ENCODE measurements at regions of chr6 and their contacts with region 1.

Region 1: DNA sequence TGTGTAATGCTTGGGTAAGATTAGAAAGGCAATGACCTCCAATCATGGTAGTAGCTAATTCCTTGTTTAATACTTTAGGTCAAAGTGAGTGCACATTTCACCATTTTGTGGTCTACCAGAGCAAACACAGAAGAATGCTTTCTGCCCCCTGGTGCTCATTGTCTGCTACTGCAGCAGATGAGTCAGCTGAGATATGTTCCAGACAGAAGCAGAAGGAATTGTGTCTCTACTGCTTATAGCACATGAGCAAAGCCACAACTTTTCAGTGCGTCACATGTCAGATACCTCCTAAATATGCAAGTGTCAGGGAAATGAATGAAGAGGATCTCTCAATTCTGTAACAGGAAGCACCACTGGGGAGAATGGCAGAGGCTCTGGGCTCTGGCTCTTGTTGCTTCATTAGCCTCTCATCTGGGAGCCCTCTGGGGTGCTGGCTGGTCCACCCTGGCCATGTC is 308.9 kb downstream of the ALDH8A1 start:
- DNase-seq: peak; percentile 85
- H3K4me3 Mint-ChIP-seq: no peak overlapping the region
- H3K27ac Mint-ChIP-seq: no peak overlapping the region
- H3K4me1 Mint-ChIP-seq: peaks cover 32% of the 10 kb centered on the region
- H3K27me3 Mint-ChIP-seq: no peaks in the 10 kb centered on the region

Region 2: GRCh38 chr6:134288538-134289203 is 352.3 kb before region 1 on chr6:
- CTCF ChIA-PET with region 1: interaction called, 3 read pairs
- POLR2A ChIA-PET with region 1: no interaction called
- intact Hi-C with region 1: loop called (anchors 2 kb)
- DNase-seq: peak; percentile 15
- H3K4me3 Mint-ChIP-seq: peak overlapping the region; percentile 21
- H3K27ac Mint-ChIP-seq: peak overlapping the region; percentile 85
- H3K4me1 Mint-ChIP-seq: peaks cover 22% of the 10 kb centered on the region
- H3K27me3 Mint-ChIP-seq: no peaks in the 10 kb centered on the region

Region 3: DNA sequence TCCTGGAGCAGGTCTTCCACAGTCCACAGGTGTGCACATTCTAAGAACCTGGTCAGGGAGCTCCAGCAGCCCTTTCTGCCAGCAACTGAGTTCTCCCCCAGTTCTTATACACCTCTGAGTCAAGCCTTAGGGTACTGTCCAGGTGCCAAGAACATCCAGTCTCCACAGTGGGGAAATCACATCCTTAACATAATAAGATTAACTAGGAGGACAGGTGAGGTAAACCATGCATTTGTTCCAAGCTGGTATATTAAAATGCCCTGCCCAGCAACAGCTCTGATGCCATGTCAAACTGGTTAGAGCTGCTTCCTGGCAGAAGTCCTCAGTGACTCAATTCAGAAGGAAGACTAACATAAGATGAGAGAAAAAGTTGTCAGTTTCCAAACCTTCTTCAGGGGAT is 19.1 kb before region 1 on chr6:
- CTCF ChIA-PET with region 1: interaction called, 16 read pairs
- POLR2A ChIA-PET with region 1: no interaction called
- intact Hi-C with region 1: no loop called
- DNase-seq: no peak
- H3K4me3 Mint-ChIP-seq: no peak overlapping the region
- H3K27ac Mint-ChIP-seq: no peak overlapping the region
- H3K4me1 Mint-ChIP-seq: peaks cover 12% of the 10 kb centered on the region
- H3K27me3 Mint-ChIP-seq: no peaks in the 10 kb centered on the region

Region 4: GRCh38 chr6:134662077-134662700 is 21.2 kb after region 1 on chr6:
- CTCF ChIA-PET with region 1: interaction called, 13 read pairs
- POLR2A ChIA-PET with region 1: no interaction called
- intact Hi-C with region 1: no loop called
- DNase-seq: no peak
- H3K4me3 Mint-ChIP-seq: no peak overlapping the region
- H3K27ac Mint-ChIP-seq: no peak overlapping the region
- H3K4me1 Mint-ChIP-seq: no peaks in the 10 kb centered on the region
- H3K27me3 Mint-ChIP-seq: no peaks in the 10 kb centered on the region

Measured in activated CD4-positive, alpha-beta memory T cell treated with anti-CD3 and anti-CD28 coated beads for 36 hours (primary cell).